ENCODE measurements at regions of chr6 and their contacts with region 1.

Region 1: DNA sequence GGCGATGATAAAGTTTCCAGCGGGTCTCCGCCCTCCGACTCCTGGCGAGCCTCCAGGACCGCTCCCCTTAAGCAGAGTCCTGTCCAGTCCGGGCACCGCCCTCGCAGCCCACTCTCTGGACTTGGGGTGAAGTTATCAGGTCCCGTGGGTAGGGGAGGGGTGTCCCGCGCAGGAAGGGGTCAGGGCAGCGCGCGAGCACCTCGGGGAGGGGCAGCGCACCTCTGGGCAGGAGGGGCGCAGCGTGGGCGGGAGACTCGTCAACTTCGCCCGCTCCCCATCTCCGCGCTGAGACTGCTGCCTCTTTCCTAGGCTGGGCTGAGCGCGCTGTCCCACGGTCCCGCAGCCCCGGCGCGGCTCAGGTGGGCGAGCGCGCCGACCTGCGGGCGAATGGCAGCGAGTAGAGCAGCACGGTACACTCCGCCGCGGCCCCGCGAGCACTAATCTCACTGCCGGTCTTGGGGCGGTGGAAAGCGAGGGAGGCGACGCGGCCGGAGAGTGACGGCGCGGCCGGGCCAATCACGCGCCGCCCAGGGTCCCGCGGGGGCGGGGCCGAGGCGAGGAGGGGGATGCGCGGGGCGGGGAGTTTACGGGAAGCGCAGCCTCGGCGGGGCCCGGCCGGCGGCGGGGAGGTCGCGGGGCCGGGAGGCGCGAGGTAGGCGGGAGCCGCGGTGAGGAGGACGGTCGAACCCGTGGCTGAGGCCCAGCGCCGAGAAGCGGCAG is at the start of gene MAN1A1:
- DNase-seq: peak; percentile 96 to 99 (median 98)
- ATAC-seq: peak; percentile 86
- H3K4me3 ChIP-seq: peak within 1 kb of the TSS; percentile 77
- H3K27ac ChIP-seq: peak within 1 kb of the TSS; percentile 89
- H3K4me1 ChIP-seq: peaks cover 8 to 17% of the 10 kb centered on the region in 2 experiments; a peak in 2 of 5 replicates
- H3K27me3 ChIP-seq: no peaks in the 10 kb centered on the region
- CTCF ChIP-seq: peak in 2 of 3 experiments; percentile 28 to 47; a peak in 2 of 6 replicates
- EP300 ChIP-seq: no peak
- POLR2A ChIP-seq: peak; percentile 90
- RAD21 ChIP-seq: peak; percentile 40 to 42
- polyA plus RNA-seq, gene MAN1A1: 24.5 to 27.7 TPM

Region 2: DNA sequence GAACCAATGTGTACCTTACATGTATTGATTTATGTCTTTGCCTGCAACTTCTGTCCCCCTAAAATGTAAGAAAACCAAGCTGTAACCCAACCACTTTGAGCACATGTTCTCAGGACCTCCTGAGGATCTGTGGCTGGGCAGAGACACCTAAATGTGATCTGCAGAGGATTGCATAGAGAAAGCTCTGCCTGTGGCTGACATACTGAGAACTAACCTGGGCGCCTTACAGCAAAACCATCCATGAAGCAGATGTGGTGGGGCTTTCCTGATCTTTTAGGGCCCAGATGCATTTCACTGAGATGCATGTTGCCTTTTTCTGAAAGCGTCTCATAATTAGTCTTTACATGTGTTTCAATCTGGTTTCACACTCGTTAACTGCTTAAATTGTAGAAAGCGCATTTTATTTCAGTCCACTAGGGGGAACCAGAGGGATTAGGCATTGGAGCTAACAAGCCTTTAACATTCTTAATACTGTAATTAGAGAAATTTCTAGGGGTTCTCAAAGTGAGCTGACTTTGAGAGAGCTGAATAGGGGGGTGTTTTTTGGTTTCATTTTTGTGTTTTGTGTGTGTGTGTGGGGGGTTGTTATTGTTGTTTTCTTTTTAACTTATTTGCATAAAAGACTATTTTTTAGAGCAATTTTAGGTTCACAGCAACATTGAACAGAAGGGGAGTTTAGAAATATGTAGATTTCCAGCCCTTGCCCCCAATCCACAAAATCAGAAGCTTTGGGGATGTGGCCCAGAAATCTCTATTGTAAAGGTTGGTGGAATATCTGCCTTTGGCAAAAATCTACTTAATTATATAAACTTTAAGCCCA is 220.1 kb before region 1 on chr6:
- CTCF ChIA-PET with region 1: no interaction called
- POLR2A ChIA-PET with region 1: interaction called, 4 read pairs
- in situ Hi-C with region 1: loop called (anchors 5 kb)
- intact Hi-C with region 1: no loop called
- DNase-seq: peak; percentile 57 to 86 (median 60)
- ATAC-seq: peak; percentile 84
- H3K4me3 ChIP-seq: no peak overlapping the region
- H3K27ac ChIP-seq: peak overlapping the region; percentile 27; the same call in 1 of the 3 replicates
- H3K4me1 ChIP-seq: peaks cover 0 to 20% of the 10 kb centered on the region in 2 experiments; a peak in 3 of 5 replicates
- H3K27me3 ChIP-seq: no peaks in the 10 kb centered on the region
- CTCF ChIP-seq: peak; percentile 61 to 90 (median 75); a peak in 5 of 6 replicates
- EP300 ChIP-seq: no peak
- POLR2A ChIP-seq: no peak
- RAD21 ChIP-seq: peak; percentile 88 to 90

Region 3: DNA sequence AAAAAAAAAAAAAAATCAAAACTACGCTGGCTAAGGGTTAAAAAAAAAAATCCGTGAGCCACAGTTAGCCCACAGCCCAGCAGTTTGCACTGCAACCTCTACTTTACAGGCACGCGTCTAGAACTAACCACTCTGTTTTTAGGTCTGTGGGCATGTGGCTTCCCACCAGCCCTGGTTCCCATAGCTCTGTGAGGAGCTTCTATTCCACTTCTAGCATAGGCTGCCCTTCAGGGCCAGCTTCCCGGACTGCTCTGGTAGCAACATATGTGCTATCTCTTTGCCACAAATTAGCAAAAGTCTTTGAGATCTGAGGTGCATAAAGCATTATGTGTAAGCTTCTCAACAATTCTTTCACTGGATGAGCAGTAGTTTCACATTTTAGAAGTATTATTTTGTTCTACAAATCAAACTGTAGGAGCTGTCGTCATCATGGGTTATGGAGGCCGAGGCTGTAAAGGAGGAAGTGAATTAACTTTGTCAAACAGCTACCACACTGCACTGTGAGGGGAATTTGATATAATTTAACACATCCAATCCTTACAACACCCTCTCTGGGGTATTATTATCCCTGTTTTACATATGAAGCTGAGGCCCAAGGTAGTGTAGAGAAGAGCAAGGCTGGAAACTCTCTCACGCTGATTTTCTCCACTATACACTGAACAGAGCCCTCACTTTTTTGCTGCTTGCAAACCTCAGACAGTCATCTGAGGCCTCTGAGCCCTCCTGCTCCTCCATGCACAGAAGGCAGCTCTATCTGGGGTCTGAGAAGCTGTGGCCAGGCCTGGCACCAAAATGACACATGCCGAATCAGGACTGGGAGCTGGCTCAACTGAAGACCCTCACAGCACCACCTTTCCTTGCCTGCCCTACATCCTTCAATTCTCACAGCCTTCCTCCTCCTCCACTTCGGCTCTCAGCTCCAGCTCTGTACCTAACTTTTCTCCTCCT is 35.3 kb before region 1 on chr6:
- CTCF ChIA-PET with region 1: no interaction called
- POLR2A ChIA-PET with region 1: interaction called, 8 read pairs
- in situ Hi-C with region 1: no loop called
- intact Hi-C with region 1: loop called (anchors 2 kb)
- DNase-seq: peak in 1 of 4 experiments; percentile 35
- ATAC-seq: peak; percentile 30
- H3K4me3 ChIP-seq: no peak overlapping the region
- H3K27ac ChIP-seq: peak overlapping the region; percentile 91
- H3K4me1 ChIP-seq: peaks cover 40 to 83% of the 10 kb centered on the region in 2 experiments
- H3K27me3 ChIP-seq: no peaks in the 10 kb centered on the region
- CTCF ChIP-seq: no peak
- EP300 ChIP-seq: no peak
- POLR2A ChIP-seq: no peak
- RAD21 ChIP-seq: no peak

Region 4: GRCh38 chr6:119495230-119495683 is 145.8 kb after region 1 on chr6:
- CTCF ChIA-PET with region 1: no interaction called
- POLR2A ChIA-PET with region 1: no interaction called
- in situ Hi-C with region 1: no loop called
- intact Hi-C with region 1: loop called (anchors 5 kb)
- DNase-seq: peak in 1 of 4 experiments; percentile 22
- ATAC-seq: no peak
- H3K4me3 ChIP-seq: no peak overlapping the region
- H3K27ac ChIP-seq: no peak overlapping the region
- H3K4me1 ChIP-seq: peaks cover 2 to 7% of the 10 kb centered on the region in 2 experiments; a peak in 2 of 5 replicates
- H3K27me3 ChIP-seq: no peaks in the 10 kb centered on the region
- CTCF ChIP-seq: no peak
- EP300 ChIP-seq: no peak
- POLR2A ChIP-seq: no peak
- RAD21 ChIP-seq: no peak

Region 5: GRCh38 chr6:119720160-119720559 is 370.7 kb after region 1 on chr6:
- CTCF ChIA-PET with region 1: no interaction called
- POLR2A ChIA-PET with region 1: interaction called, 4 read pairs
- in situ Hi-C with region 1: no loop called
- intact Hi-C with region 1: loop called (anchors 5 kb)
- DNase-seq: peak; percentile 13 to 55 (median 22)
- ATAC-seq: peak; percentile 96
- H3K4me3 ChIP-seq: no peak overlapping the region
- H3K27ac ChIP-seq: no peak overlapping the region
- H3K4me1 ChIP-seq: no peaks in the 10 kb centered on the region
- H3K27me3 ChIP-seq: no peaks in the 10 kb centered on the region
- CTCF ChIP-seq: peak; percentile 35 to 75 (median 52); a peak in 5 of 6 replicates
- EP300 ChIP-seq: no peak
- POLR2A ChIP-seq: no peak
- RAD21 ChIP-seq: peak; percentile 24 to 50; a peak in 3 of 4 replicates

Region 6: GRCh38 chr6:119978274-119978889 is 628.9 kb after region 1 on chr6:
- CTCF ChIA-PET with region 1: interaction called, 5 read pairs
- POLR2A ChIA-PET with region 1: no interaction called
- in situ Hi-C with region 1: no loop called
- intact Hi-C with region 1: loop called (anchors 5 kb)
- DNase-seq: peak in 1 of 4 experiments; percentile 14
- ATAC-seq: peak; percentile 55; the same call in 1 of the 3 replicates
- H3K4me3 ChIP-seq: no peak overlapping the region
- H3K27ac ChIP-seq: no peak overlapping the region
- H3K4me1 ChIP-seq: no peaks in the 10 kb centered on the region
- H3K27me3 ChIP-seq: no peaks in the 10 kb centered on the region
- CTCF ChIP-seq: peak; percentile 2 to 44 (median 25); a peak in 3 of 6 replicates
- EP300 ChIP-seq: no peak
- POLR2A ChIP-seq: no peak
- RAD21 ChIP-seq: peak; percentile 21 to 43; a peak in 3 of 4 replicates